ENCODE measurements at regions of chr16 and their contacts with region 1.

Region 1: DNA sequence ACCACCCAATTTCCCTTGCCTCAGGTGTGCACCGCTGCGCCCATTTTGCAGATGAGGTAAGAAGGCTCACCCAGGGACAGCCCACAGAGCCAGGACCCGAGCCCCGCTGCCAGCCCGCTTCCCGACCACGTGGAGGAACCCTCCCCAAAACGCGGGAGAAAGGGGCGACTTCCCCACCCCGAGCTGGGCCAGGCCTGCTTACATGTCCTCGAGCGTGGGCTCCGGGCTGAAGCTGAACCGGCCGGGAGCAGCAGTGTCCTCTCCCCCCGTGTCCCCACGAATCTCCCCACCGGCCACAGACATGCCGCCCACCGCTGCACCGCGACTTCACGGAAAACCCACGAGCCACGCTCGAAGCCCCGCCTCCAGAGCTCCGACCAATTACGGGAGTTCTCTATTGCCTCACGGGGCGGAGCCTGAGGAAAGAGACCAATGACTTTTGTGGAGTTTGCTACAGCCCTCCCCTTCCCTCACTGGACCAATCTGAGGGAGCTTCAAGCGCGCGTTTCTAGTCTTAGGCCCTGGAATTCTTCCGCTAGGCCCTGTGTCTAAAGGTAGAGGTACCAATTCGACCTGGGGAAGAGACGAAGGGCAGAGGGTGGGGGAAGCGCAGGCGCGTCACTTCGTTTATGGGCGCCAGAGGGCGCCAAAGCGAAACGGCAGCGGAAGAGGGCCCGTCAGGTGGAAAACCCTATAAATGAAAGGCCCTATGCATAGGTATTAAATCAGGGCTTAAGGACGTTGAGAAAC is at the start of gene DCTPP1:
- DNase-seq: peak; percentile 99
- H3K4me3 Mint-ChIP-seq: no peak within 1 kb of the TSS
- H3K27ac Mint-ChIP-seq: no peak within 1 kb of the TSS
- H3K4me1 Mint-ChIP-seq: peaks cover 38% of the 10 kb centered on the region
- H3K27me3 Mint-ChIP-seq: no peaks in the 10 kb centered on the region
- total RNA-seq, gene DCTPP1: 48.4 to 51.4 TPM

Region 2: DNA sequence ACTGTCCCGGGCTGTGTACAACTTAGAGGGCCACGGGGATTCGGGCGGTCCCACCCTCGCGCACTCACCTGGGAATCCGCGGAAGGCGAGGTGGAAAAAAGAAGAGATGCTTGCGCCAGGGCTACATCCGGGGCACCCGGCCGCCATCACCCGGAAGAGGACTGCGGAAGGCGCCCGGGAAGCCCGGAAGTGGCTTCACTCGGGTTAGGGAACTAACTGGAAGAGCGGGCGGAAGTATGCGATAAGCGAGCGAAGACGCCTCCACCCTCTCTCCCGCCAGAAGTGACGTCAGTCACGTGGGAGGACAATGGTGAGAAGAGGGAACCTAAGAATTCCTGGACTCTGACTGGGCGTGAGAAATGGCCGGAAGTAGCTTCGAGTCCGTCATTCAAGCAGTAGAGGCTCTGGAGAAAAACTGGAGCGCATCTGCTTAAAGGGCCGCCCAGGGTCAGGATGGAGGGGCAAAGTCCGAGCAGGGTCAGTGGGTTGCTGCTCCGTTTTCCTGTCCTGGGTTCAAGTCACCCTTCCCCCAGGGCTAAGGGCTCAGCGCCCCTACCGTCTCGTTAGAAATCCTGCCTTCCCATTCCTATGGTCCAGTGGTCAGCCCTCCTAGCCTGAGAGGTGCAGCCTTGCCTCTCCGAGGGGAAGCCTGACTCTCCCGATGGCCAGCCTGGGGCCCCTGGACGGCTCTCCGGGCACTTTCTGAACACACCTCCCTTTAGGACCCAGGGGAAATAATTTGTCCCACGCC is 74.5 kb before region 1 on chr16 and contains the start of gene CD2BP2:
- CTCF ChIA-PET with region 1: no interaction called
- POLR2A ChIA-PET with region 1: no interaction called
- DNase-seq: peak; percentile 88
- H3K4me3 Mint-ChIP-seq: peak within 1 kb of the TSS; percentile 91
- H3K27ac Mint-ChIP-seq: peak within 1 kb of the TSS; percentile 92
- H3K4me1 Mint-ChIP-seq: peaks cover 46% of the 10 kb centered on the region
- H3K27me3 Mint-ChIP-seq: no peaks in the 10 kb centered on the region
- total RNA-seq, gene CD2BP2: 51.8 to 65.0 TPM

Region 3: GRCh38 chr16:30417529-30418349 is 12.1 kb before region 1 on chr16:
- CTCF ChIA-PET with region 1: interaction called, 17 read pairs
- POLR2A ChIA-PET with region 1: interaction called, 6 read pairs
- DNase-seq: peak; percentile 90
- H3K4me3 Mint-ChIP-seq: peak overlapping the region; percentile 59
- H3K27ac Mint-ChIP-seq: peak overlapping the region; percentile 31
- H3K4me1 Mint-ChIP-seq: peaks cover 35% of the 10 kb centered on the region
- H3K27me3 Mint-ChIP-seq: no peaks in the 10 kb centered on the region

Region 4: DNA sequence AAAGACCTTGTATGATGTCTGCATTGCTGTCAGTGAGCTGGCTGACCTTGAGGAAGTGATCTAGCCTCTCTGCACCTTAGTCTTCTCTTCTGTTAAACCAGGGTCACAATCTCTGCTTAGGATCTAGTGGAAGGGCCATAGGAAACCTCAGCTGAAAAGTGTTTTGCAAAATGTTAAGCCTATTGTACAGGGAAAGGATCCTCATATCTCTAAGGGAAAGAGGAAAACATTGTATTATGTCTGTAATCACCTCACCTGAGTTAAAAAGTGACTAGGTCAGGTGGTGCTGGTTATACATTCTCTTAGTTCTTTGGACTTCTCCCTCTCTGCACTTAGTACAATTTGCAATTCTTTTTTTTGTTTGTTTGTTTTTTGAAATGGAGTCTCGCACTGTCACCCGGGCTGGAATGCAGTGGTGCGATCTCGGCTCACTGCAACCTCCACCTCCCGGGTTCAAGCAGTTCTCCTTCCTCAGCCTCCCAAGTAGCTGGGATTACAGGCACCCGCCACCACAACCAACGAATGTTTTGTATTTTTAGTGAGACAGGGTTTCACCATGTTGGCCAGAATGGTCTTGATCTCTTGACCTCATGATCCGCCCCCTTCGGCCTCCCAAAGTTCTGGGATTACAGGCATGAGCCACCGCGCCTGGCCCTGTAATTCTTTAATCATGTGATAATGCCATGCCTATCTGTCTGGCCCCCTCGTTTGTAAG is 17.8 kb after region 1 on chr16:
- CTCF ChIA-PET with region 1: interaction called, 13 read pairs
- POLR2A ChIA-PET with region 1: no interaction called
- DNase-seq: no peak
- H3K4me3 Mint-ChIP-seq: no peak overlapping the region
- H3K27ac Mint-ChIP-seq: peak overlapping the region; percentile 68
- H3K4me1 Mint-ChIP-seq: peaks cover 72% of the 10 kb centered on the region
- H3K27me3 Mint-ChIP-seq: no peaks in the 10 kb centered on the region

Region 5: DNA sequence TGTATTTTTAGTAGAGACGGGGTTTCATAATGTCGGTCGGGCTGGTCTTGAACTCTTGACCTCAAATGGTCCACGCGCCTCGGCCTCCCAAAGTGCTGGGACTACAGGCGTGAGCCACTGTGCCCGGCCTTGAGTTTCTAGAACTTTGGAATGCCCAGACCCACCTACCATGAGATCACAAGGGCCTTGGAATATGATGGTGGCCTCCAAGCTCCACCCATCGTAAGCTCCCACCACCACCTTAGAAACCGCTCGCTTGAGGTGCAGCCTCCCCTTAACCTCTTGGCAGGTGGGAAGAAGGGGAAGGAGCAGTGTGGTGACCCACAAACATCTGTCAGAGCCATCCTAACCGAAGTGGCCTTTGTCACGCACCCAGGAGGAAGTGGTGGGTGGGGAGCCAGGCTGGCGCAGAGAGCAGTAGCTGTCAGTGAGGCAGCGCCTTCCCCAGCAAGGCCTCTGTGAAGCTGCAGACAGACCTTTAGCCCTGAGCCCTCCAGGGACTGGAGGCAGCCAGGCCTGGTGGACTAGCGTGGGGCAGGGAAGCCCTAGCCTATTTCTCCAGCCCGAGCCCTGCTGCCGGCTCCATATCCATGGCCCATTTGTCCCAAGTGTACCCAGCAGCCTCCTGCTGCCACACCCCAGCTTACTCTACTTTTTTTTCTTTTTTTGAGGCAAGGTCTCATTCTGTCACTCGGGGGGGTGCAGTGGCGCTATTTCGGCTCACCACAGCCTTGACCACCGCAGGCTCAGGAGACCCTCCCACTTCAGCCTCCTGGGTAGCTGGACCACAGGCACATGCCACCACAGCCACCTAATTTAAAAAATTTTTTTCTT is 28.9 kb after region 1 on chr16:
- CTCF ChIA-PET with region 1: interaction called, 10 read pairs
- POLR2A ChIA-PET with region 1: no interaction called
- DNase-seq: peak; percentile 93
- H3K4me3 Mint-ChIP-seq: peak overlapping the region; percentile 68
- H3K27ac Mint-ChIP-seq: peak overlapping the region; percentile 99
- H3K4me1 Mint-ChIP-seq: peaks cover 79% of the 10 kb centered on the region
- H3K27me3 Mint-ChIP-seq: no peaks in the 10 kb centered on the region

Region 6: GRCh38 chr16:30472328-30472942 is 42.6 kb after region 1 on chr16 and contains the start of gene ITGAL:
- CTCF ChIA-PET with region 1: interaction called, 14 read pairs
- POLR2A ChIA-PET with region 1: interaction called, 3 read pairs
- DNase-seq: peak; percentile 93
- H3K4me3 Mint-ChIP-seq: peak within 1 kb of the TSS; percentile 99
- H3K27ac Mint-ChIP-seq: peak within 1 kb of the TSS; percentile 92
- H3K4me1 Mint-ChIP-seq: peaks cover 61% of the 10 kb centered on the region
- H3K27me3 Mint-ChIP-seq: no peaks in the 10 kb centered on the region
- total RNA-seq, gene ITGAL: 521 to 598 TPM

Region 7: DNA sequence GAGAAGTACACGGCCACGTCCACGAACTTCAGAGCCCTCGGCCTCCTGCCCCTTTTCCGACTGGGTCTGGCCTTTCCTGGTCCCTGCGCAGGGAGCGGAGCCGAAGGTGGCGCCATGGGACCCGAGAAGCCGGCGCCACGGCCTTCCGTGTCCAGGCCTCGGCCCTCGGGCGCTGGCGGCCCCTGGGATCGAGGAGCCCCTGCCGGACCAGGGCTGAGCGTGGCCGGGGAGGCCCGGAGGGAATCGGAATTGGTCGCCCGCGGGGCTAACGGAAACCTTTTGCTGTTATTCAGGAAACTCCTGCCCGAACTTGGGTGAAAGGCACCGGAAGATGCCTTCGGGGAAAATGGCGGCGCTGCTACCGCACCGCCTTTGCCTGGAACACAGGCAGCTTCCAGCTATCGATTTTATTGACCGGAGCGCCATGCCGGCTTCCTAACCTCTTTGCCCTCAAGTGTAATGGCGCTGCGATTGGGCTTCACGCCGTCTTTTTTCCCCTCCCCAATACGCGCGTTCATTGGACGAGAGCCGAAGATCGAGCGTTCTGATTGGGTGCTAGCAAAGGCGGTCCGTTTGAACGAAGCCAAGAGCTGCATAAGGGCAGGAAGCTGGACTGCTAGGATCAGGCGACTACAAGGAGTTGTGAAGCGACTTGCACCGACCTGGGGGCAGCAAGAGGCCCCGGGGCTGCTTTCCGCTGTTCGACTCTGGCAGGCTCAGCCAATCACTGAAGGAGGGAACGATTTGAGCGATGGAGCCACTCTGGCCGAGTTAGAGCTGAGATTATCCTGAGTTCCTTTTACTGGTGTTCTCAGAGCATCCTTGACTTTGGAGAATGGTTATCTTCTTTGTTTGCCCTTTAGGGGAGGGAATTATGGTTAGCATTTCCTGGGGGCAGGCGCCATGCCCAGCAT is 180.3 kb after region 1 on chr16 and contains the start of gene ZNF689:
- CTCF ChIA-PET with region 1: interaction called, 11 read pairs
- POLR2A ChIA-PET with region 1: interaction called, 3 read pairs
- DNase-seq: peak; percentile 96
- H3K4me3 Mint-ChIP-seq: peak within 1 kb of the TSS; percentile 86
- H3K27ac Mint-ChIP-seq: peak within 1 kb of the TSS; percentile 97
- H3K4me1 Mint-ChIP-seq: peaks cover 24% of the 10 kb centered on the region
- H3K27me3 Mint-ChIP-seq: no peaks in the 10 kb centered on the region
- total RNA-seq, gene ZNF689: 12.8 to 13.8 TPM

Measured in activated CD4-positive, alpha-beta T cell treated with anti-CD3 and anti-CD28 coated beads, Interleukin-2, amount 10 ng/mL, durations not matched to agents 7 days and 5 days (primary cell).